A549 (cell line): ENCODE measurements at regions of chr21 and their contacts with region 1.

Region 1: GRCh38 chr21:37711836-37712568 is 204.3 kb downstream of the KCNJ6 start:
- DNase-seq: peak; percentile 27 to 74
- ATAC-seq: peak; percentile 93 to 96
- H3K4me3 ChIP-seq: no peak overlapping the region
- H3K27ac ChIP-seq: peak overlapping the region; percentile 52 to 60
- H3K4me1 ChIP-seq: peaks cover 9% of the 10 kb centered on the region
- CTCF ChIP-seq: peak; percentile 71
- EP300 ChIP-seq: no peak
- POLR2A ChIP-seq: no peak
- RAD21 ChIP-seq: peak; percentile 80 to 83

Region 2: DNA sequence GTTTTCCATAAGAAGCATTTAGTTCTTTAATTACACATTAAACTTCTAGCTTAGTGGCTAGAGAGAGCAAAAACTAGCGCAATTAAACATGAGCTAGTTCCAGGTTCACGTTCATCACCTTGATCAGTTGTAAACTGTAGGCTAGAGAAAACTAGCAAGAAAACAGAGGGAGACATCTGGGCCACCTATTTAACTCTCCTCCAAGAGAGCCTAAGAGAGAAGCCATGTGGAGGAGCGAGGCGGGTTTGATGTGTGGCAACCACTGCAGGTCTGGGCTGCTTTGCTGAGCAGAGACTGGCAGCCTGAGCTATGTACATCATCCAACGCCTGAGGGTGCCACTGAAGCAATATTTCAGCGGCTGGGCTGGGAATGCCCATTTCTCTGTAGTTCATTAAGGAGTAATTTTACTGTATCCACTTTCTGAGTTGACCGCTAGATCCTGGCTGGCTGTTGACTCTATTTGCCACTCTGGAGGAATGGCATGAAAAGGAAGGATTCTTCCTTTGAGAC is 92.5 kb before region 1 on chr21:
- CTCF ChIA-PET with region 1: no interaction called
- POLR2A ChIA-PET with region 1: no interaction called
- DNase-seq: no peak
- ATAC-seq: no peak
- H3K4me3 ChIP-seq: no peak overlapping the region
- H3K27ac ChIP-seq: no peak overlapping the region
- H3K4me1 ChIP-seq: no peaks in the 10 kb centered on the region
- CTCF ChIP-seq: no peak
- EP300 ChIP-seq: no peak
- POLR2A ChIP-seq: no peak
- RAD21 ChIP-seq: no peak

Region 3: GRCh38 chr21:37695111-37695510 is 16.9 kb before region 1 on chr21:
- CTCF ChIA-PET with region 1: interaction called, 25 read pairs
- POLR2A ChIA-PET with region 1: no interaction called
- DNase-seq: no peak
- ATAC-seq: no peak
- H3K4me3 ChIP-seq: no peak overlapping the region
- H3K27ac ChIP-seq: no peak overlapping the region
- H3K4me1 ChIP-seq: no peaks in the 10 kb centered on the region
- CTCF ChIP-seq: no peak
- EP300 ChIP-seq: no peak
- POLR2A ChIP-seq: no peak
- RAD21 ChIP-seq: no peak

Region 4: DNA sequence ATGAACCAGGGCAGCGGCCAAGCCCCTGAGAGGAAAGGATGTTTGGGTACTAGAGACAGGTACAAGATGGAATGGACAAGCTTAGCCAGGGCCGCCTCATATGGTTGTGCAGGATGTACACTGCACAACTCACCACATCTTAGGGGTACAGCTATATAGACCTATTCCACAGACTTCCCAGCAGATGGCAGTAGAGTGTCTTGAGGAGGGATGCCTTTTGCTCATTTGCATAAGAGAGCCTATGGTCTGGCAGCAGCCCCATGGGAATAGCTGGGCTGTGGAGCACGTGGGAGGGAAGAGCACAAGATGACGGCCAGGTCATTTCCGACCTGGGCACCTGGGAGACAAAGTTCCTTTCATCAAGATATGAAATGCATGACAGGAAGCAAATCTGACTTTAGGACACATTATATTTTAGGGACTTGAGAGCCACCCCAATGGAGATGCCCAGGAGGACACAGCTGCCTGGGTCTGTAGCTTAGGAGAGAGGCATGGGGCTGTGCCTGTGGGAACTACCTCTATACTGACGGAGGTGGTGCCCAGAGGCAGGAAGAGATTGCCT is 11.3 kb before region 1 on chr21:
- CTCF ChIA-PET with region 1: interaction called, 25 read pairs
- POLR2A ChIA-PET with region 1: no interaction called
- DNase-seq: peak; percentile 63 to 84
- ATAC-seq: peak; percentile 87 to 98
- H3K4me3 ChIP-seq: no peak overlapping the region
- H3K27ac ChIP-seq: peak overlapping the region; percentile 38 to 70; a peak in 4 of 6 replicates
- H3K4me1 ChIP-seq: peaks cover 9% of the 10 kb centered on the region; the same call in 2 of the 3 replicates
- CTCF ChIP-seq: peak; percentile 54
- EP300 ChIP-seq: no peak
- POLR2A ChIP-seq: no peak
- RAD21 ChIP-seq: peak; percentile 69

Region 5: GRCh38 chr21:37916310-37917051 is 204.5 kb after region 1 on chr21 and contains the start of gene KCNJ6:
- CTCF ChIA-PET with region 1: interaction called, 11 read pairs
- POLR2A ChIA-PET with region 1: no interaction called
- DNase-seq: peak; percentile 46 to 58
- ATAC-seq: peak; percentile 92
- H3K4me3 ChIP-seq: peak within 1 kb of the TSS; percentile 59
- H3K27ac ChIP-seq: peak within 1 kb of the TSS; percentile 90 to 91
- H3K4me1 ChIP-seq: peaks cover 46% of the 10 kb centered on the region
- CTCF ChIP-seq: peak; percentile 37
- EP300 ChIP-seq: no peak
- POLR2A ChIP-seq: no peak
- RAD21 ChIP-seq: peak; percentile 57 to 68
- polyA plus RNA-seq, gene KCNJ6: 1.4 and 2.3 TPM in 2 replicates

Region 6: DNA sequence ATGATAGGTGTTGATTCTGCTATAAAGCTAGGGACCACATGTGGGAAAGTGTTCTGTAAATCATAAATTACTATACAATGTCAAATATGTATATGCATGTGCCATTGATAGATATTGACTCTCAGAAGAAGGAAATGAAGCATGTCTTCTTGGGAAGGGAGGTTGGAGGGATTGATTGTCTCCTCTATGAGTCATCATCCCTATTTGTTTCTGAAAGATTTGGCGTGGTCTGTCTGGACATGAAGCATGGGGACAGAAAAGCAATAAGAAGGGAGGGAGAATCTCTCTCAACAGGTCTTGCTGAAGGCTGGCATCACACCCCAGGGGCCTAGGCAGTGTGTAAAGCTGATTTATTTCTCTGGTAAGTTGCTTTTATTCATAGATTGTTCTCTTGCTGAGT is 302.3 kb after region 1 on chr21:
- CTCF ChIA-PET with region 1: no interaction called
- POLR2A ChIA-PET with region 1: no interaction called
- DNase-seq: no peak
- ATAC-seq: no peak
- H3K4me3 ChIP-seq: no peak overlapping the region
- H3K27ac ChIP-seq: peak overlapping the region in 1 of 2 experiments; percentile 49; a peak in 1 of 6 replicates
- H3K4me1 ChIP-seq: peaks cover 11% of the 10 kb centered on the region; the same call in 1 of the 3 replicates
- CTCF ChIP-seq: no peak
- EP300 ChIP-seq: no peak
- POLR2A ChIP-seq: no peak
- RAD21 ChIP-seq: no peak

Region 7: GRCh38 chr21:38126669-38127303 is 414.8 kb after region 1 on chr21:
- CTCF ChIA-PET with region 1: interaction called, 12 read pairs
- POLR2A ChIA-PET with region 1: no interaction called
- DNase-seq: peak; percentile 10 to 68
- ATAC-seq: peak in 1 of 2 experiments; percentile 91; a peak in 4 of 6 replicates
- H3K4me3 ChIP-seq: no peak overlapping the region
- H3K27ac ChIP-seq: peak overlapping the region; percentile 52 to 57; a peak in 5 of 6 replicates
- H3K4me1 ChIP-seq: 0 out of 3 replicates have a peak, but pooled peaks cover 6% of the 10 kb centered on the region
- CTCF ChIP-seq: peak; percentile 46; the same call in 2 of the 3 replicates
- EP300 ChIP-seq: no peak
- POLR2A ChIP-seq: no peak
- RAD21 ChIP-seq: peak; percentile 65 to 68